Pancreas (tissue), 10 donors: ENCODE measurements at regions of chr20 and their contacts with region 1.

Region 1: GRCh38 chr20:25336561-25337422 is 53.8 kb downstream of the ABHD12 start:
- DNase-seq: peak in 3 of 6 donors; percentile 34 to 49 (median 42)
- ATAC-seq: peak; percentile 39 to 68 (median 60)
- H3K4me3 ChIP-seq: peak overlapping the region in 2 of 4 donors; percentile 16 to 22
- H3K27ac ChIP-seq: peak overlapping the region in 2 of 4 donors; percentile 84 to 88
- H3K4me1 ChIP-seq: peaks cover 35 to 44% (median 41%) of the 10 kb centered on the region in 3 donors
- H3K27me3 ChIP-seq: no peaks in the 10 kb centered on the region
- CTCF ChIP-seq: peak in 1 of 4 donors; percentile 14

Region 2: GRCh38 chr20:25399037-25399430 is 62.2 kb after region 1 on chr20:
- intact Hi-C with region 1: loop called in 2 of 3 experiments (anchors 5 kb)
- DNase-seq: peak in 2 of 6 donors; percentile 19 to 63
- ATAC-seq: peak; percentile 83 to 98 (median 98)
- H3K4me3 ChIP-seq: no peak overlapping the region
- H3K27ac ChIP-seq: peak overlapping the region in 1 of 4 donors; percentile 26
- H3K4me1 ChIP-seq: peaks cover 0 to 11% (median 0%) of the 10 kb centered on the region in 3 donors
- H3K27me3 ChIP-seq: no peaks in the 10 kb centered on the region
- CTCF ChIP-seq: peak in 3 of 4 donors; percentile 43 to 44 (median 44)